ENCODE measurements at regions of chr3 and their contacts with region 1.

Region 1: GRCh38 chr3:47781685-47782445 is at the start of gene SMARCC1:
- DNase-seq: peak; percentile 97
- ATAC-seq: peak; percentile 93
- H3K4me3 ChIP-seq: peak within 1 kb of the TSS; percentile 61
- H3K27ac ChIP-seq: peak within 1 kb of the TSS; percentile 92
- H3K4me1 ChIP-seq: peaks cover 2% of the 10 kb centered on the region
- H3K27me3 ChIP-seq: no peaks in the 10 kb centered on the region
- CTCF ChIP-seq: no peak
- POLR2A ChIP-seq: peak; percentile 87
- RAD21 ChIP-seq: no peak
- total RNA-seq, gene SMARCC1: 39.6 and 51.4 TPM in 2 replicates

Region 2: GRCh38 chr3:47380601-47381316 is 401.1 kb before region 1 on chr3 and contains the start of gene PTPN23:
- CTCF ChIA-PET with region 1: no interaction called
- POLR2A ChIA-PET with region 1: no interaction called
- dilution Hi-C with region 1: no loop called
- in situ Hi-C with region 1: no loop called
- intact Hi-C with region 1: loop called (anchors 5 kb)
- DNase-seq: peak; percentile 98
- ATAC-seq: peak; percentile 83
- H3K4me3 ChIP-seq: peak within 1 kb of the TSS; percentile 60
- H3K27ac ChIP-seq: peak within 1 kb of the TSS; percentile 86
- H3K4me1 ChIP-seq: peaks cover 7% of the 10 kb centered on the region
- H3K27me3 ChIP-seq: no peaks in the 10 kb centered on the region
- CTCF ChIP-seq: no peak
- POLR2A ChIP-seq: peak; percentile 94
- RAD21 ChIP-seq: no peak
- total RNA-seq, gene PTPN23: 4.4 and 4.5 TPM in 2 replicates

Region 3: GRCh38 chr3:47669026-47669749 is 112.7 kb before region 1 on chr3:
- CTCF ChIA-PET with region 1: no interaction called
- POLR2A ChIA-PET with region 1: interaction called, 14 read pairs
- dilution Hi-C with region 1: no loop called
- in situ Hi-C with region 1: no loop called
- intact Hi-C with region 1: no loop called
- DNase-seq: peak; percentile 66
- ATAC-seq: peak; percentile 99
- H3K4me3 ChIP-seq: no peak overlapping the region
- H3K27ac ChIP-seq: no peak overlapping the region
- H3K4me1 ChIP-seq: peaks cover 4% of the 10 kb centered on the region; the same call in 1 of the 2 replicates
- H3K27me3 ChIP-seq: no peaks in the 10 kb centered on the region
- CTCF ChIP-seq: no peak
- POLR2A ChIP-seq: no peak
- RAD21 ChIP-seq: no peak

Measured in IMR-90 (cell line).